Mucosa of descending colon (tissue), 3 donors: ENCODE measurements at regions of chr22 and their contacts with region 1.

Region 1: DNA sequence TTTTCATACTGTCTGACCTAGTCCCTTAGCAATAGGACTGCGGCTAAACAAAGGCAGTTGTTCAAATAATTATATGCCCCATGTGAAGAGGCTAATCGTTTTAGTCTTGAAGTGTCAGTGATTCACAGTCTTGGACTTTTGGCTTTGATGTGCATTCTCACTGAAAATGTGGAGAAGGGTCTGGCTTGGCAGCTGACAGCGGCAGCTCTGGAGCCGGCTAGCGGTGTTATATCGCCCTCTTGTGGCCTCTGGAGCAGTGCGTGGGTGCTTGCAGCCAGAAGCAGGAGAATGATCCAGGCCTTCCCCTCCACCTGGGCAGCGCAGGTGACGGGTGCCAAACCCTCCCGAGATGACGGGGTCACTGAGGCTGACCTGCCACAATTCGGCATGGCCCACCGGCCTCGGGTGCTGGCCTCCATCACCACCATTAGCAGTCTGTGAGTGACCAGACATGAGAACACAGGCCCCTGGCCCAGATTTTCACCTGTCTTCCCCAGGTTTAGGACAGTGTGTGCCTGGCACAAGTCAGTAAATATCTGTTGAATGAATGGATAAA is 90.3 kb upstream of the PITPNB start:
- DNase-seq: peak; percentile 65 to 84 (median 81)
- ATAC-seq: peak; percentile 90
- H3K4me3 ChIP-seq: no peak overlapping the region
- H3K4me1 ChIP-seq: no peaks in the 10 kb centered on the region
- CTCF ChIP-seq: peak; percentile 94

Region 2: DNA sequence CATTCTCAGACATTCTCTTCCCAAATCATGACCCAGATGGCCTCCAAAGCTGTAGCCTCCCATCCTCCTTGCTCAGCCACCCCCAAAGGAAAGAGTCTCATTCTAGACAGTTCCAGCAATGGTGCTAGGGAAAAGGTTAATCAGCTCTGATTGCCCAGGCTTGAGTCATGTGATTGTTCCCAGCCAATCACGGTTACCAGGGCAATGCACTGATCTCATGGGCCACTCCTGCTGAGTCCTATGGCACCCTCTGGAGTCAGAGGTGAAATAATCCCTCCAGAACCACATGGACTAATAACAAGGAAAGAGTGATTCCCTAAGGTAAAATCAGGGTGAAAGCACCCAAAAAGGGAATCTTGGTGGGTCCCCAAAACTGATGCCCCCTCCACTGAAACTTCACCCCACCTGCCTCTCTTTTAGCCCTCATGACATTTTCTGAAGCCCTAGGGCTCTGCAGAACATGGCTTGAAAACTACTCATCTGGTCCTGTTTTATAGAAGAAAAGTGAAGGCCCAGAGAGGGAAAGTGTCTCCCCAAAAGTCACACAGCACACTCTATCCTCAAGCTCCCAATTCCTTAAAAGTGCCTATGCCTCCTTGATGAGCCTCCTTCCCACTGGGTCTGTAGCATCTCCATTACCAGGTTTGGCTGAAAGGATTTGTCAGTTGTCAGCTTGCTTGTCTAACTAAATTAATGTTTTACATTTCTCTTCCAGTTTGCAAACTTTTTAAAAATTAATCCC is 411.5 kb before region 1 on chr22:
- intact Hi-C with region 1: no loop called
- DNase-seq: no peak
- ATAC-seq: peak; percentile 51
- H3K4me3 ChIP-seq: no peak overlapping the region
- H3K4me1 ChIP-seq: no peaks in the 10 kb centered on the region
- CTCF ChIP-seq: no peak

Region 3: DNA sequence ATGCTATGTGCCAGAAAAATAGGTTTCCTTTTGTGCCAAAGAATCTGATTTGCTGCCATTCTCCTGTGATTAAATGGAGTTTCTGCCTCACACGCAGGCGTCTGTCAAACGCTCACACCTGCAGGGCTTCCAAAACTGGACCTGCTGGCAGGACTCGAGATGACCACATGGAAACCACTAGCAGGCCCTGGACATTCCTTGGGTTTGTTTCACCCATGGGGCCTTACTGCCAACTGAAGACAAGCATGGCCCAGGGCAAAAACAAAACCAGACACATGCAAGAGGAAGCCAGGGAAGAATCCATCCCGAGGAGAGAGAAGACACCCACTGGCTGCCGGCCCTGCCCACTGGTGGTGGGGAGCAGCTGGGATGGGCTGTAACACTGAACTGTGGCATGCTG is 151.9 kb before region 1 on chr22:
- intact Hi-C with region 1: no loop called
- DNase-seq: no peak
- ATAC-seq: no peak
- H3K4me3 ChIP-seq: no peak overlapping the region
- H3K4me1 ChIP-seq: peaks cover 15% of the 10 kb centered on the region
- CTCF ChIP-seq: no peak

Region 4: DNA sequence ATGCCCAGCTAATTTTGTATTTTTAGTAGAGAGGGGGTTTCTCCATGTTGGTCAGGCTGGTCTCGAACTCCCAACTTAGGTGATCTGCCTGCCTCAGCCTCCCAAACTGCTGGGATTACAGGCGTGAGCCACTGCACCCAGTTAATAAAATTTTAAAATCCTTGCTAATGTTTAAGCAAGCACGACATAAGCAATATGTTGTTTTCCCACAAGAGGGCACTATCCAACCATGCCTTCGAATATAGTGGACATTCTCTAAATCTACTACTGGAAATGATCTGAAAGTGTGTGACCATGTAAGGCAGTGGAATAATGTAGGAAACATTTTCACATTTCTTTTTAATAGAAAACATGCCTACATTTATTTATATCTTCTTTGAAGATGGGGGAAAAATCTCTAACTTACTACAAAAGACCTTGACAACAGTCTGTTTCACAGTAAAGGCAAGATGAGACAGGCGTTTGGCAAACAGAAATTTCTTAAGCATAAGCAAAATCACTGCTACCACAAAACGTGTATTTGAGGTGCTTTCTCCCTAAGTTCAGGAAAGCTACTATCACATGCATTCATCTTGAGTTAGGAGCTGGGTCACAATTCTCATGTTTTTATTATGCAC is 128.5 kb before region 1 on chr22:
- intact Hi-C with region 1: loop called (anchors 5 kb)
- DNase-seq: peak in 1 of 3 donors; percentile 78
- ATAC-seq: peak; percentile 86
- H3K4me3 ChIP-seq: no peak overlapping the region
- H3K4me1 ChIP-seq: no peaks in the 10 kb centered on the region
- CTCF ChIP-seq: peak; percentile 35

Region 5: DNA sequence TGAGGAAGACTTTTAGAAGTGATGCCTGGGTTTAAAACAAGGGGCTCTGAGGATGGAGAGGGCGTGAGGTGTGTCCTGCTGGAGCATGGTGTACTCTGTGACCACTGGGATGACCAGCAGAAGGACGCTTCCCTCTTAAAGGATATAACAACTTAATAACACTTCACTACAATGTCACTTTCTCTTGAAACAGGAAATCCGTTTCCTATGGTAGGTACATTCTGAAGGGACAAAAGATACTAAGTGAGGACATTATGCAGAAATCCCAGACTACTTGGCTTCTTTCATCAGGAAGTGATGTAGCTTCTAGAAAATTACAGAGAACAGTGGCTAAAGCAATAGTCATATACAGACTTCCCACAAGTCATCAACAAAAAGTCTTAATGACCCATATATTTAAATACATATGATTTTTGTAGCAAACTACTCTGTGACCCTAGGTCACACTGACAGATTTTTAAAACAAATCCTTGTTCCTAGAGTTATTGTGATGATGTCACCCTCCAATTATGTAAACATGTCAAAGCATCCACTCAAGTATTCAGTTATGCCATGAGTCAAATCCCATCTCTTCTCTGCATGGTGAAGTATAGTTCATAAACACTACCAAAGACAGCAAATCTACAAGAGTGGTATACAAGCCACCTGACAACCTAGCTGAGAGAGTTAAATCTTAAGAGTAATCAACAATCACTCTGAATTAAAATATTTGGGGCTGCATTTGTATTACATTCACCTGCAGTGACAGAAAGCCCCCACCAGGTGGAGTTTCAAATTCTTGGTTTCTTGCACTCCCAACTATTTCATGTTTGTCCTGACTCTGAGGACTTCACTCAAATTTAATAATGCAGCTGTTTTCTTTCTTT is 123.1 kb before region 1 on chr22:
- intact Hi-C with region 1: loop called (anchors 5 kb)
- DNase-seq: peak in 1 of 3 donors; percentile 62
- ATAC-seq: peak; percentile 69
- H3K4me3 ChIP-seq: no peak overlapping the region
- H3K4me1 ChIP-seq: no peaks in the 10 kb centered on the region
- CTCF ChIP-seq: peak; percentile 83

Region 6: DNA sequence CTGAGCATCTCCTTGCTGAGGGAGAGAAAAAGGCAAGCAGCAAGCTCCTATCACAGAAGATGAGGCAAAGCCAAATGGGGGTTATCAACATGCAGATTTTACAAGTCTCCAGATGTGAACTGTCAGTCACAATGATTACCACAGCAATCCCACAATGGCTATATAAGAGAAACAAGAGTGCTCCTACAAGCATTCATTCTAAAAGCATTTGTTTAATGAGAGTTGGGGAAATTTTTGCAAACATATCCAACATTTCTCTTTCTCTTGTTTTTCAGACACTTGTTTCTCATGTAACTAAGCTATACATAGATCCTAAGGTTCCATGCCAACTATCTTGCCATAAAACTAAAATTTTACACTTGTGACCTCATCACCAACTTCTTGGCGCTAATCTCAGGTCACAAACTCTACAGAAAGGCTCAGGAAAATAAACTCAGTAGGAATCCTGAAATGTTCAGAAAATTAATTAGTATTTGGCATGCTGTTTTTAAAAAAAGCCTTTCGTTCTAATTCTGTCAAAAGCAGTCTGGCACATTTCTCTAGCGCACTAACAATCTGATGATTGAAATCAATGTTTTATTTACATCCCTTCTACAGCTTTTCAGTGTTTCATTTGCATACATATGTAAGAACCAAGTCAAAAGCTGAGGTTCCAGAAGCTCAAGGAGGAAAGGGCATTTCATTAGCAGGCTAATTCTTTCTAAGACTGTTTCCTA is 470.8 kb after region 1 on chr22:
- intact Hi-C with region 1: no loop called
- DNase-seq: no peak
- ATAC-seq: no peak
- H3K4me3 ChIP-seq: no peak overlapping the region
- H3K4me1 ChIP-seq: no peaks in the 10 kb centered on the region
- CTCF ChIP-seq: no peak